WTC11 (cell line): ENCODE measurements at regions of chr11 and their contacts with region 1.

Region 1: DNA sequence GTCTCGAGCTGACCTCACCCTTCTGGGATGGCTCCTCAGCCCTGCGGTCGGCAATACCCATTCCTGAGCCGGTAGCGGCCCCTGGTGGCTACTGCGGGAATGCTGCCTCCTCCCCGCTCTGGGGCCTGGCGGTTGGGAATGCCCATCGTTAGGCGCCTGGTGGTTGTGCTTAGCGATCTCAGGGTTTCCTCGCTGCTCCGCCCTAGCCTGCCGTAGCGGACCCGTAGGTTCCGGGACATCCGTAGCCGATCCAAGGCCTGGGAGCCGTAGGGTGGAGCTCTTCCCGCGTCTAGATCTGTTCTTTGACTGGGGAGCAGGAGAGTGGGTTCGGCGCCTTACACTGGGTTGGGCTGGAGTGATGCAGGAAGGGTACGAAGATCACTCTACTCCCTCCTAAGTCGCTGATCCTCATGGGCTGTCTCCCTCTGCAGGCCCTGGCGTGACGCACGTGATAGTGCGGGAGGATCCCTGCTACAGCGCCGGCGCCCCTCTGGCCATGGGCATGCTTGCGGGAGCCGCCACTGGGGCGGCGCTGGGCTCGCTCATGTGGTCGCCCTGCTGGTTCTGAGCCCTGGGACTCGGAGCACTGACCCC is 14.8 kb downstream of the PLEKHB1 start:
- DNase-seq: peak; percentile 99
- ATAC-seq: peak; percentile 88
- H3K4me3 Mint-ChIP-seq: peak overlapping the region; percentile 72
- H3K27ac Mint-ChIP-seq: peak overlapping the region; percentile 33; the same call in 1 of the 2 replicates
- H3K4me1 Mint-ChIP-seq: peaks cover 13% of the 10 kb centered on the region
- H3K27me3 Mint-ChIP-seq: peaks cover 72% of the 10 kb centered on the region
- CTCF ChIP-seq: peak; percentile 91

Region 2: GRCh38 chr11:73393479-73394380 is 267.4 kb before region 1 on chr11:
- CTCF ChIA-PET with region 1: interaction called, 54 read pairs
- POLR2A ChIA-PET with region 1: no interaction called
- DNase-seq: peak; percentile 87
- ATAC-seq: peak; percentile 84
- H3K4me3 Mint-ChIP-seq: no peak overlapping the region
- H3K27ac Mint-ChIP-seq: no peak overlapping the region
- H3K4me1 Mint-ChIP-seq: no peaks in the 10 kb centered on the region
- H3K27me3 Mint-ChIP-seq: no peaks in the 10 kb centered on the region
- CTCF ChIP-seq: peak; percentile 68

Region 3: GRCh38 chr11:73469401-73469800 is 191.7 kb before region 1 on chr11:
- CTCF ChIA-PET with region 1: interaction called, 18 read pairs
- POLR2A ChIA-PET with region 1: no interaction called
- DNase-seq: no peak
- ATAC-seq: no peak
- H3K4me3 Mint-ChIP-seq: no peak overlapping the region
- H3K27ac Mint-ChIP-seq: peak overlapping the region; percentile 1; the same call in 1 of the 2 replicates
- H3K4me1 Mint-ChIP-seq: no peaks in the 10 kb centered on the region
- H3K27me3 Mint-ChIP-seq: no peaks in the 10 kb centered on the region
- CTCF ChIP-seq: no peak

Region 4: GRCh38 chr11:73597956-73598718 is 63.0 kb before region 1 on chr11 and contains the start of gene FAM168A:
- CTCF ChIA-PET with region 1: interaction called, 10 read pairs
- POLR2A ChIA-PET with region 1: no interaction called
- DNase-seq: peak; percentile 94
- ATAC-seq: peak; percentile 91
- H3K4me3 Mint-ChIP-seq: peak within 1 kb of the TSS; percentile 80
- H3K27ac Mint-ChIP-seq: peak within 1 kb of the TSS; percentile 85
- H3K4me1 Mint-ChIP-seq: peaks cover 43% of the 10 kb centered on the region
- H3K27me3 Mint-ChIP-seq: no peaks in the 10 kb centered on the region
- CTCF ChIP-seq: no peak
- total RNA-seq, gene FAM168A: 23.6 to 25.9 TPM (median 24.2 TPM) in 3 replicates

Region 5: DNA sequence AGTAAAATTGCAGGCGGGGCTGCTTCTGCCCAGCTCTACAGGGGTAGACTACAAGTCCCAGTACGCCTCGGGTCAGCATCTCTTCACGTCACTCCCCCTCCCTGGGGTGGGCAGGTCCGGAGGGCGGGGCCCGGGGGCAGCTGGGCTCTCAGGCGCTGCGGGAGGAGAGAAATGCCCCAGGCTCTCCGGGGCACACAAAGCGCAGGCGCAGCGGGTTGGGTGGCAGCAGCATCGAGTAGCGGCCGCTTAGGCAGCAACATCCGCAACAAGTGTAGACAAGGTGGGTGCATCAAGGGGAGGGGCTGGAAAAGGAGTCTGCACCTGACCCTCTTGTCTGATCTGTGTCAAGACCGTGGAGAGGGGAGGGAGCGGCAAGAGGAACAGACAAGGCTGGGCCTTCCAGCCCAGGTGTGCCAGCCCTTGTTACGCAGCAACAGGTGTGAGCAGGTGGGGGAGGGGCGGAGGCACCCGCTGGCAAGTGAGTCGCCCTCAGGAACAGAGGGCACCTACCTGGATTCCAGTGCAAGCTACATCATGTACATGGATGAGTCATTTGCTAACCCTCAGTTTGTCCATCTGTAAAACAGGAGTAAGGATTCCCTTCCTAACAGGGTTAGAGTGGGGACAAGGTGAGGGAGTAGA is 13.6 kb before region 1 on chr11:
- CTCF ChIA-PET with region 1: interaction called, 96 read pairs
- POLR2A ChIA-PET with region 1: interaction called, 3 read pairs
- DNase-seq: peak; percentile 96
- ATAC-seq: peak; percentile 78
- H3K4me3 Mint-ChIP-seq: peak overlapping the region; percentile 87
- H3K27ac Mint-ChIP-seq: 0 out of 2 replicates have a peak overlapping the region, but pooled peaks have one; percentile 27
- H3K4me1 Mint-ChIP-seq: peaks cover 45% of the 10 kb centered on the region
- H3K27me3 Mint-ChIP-seq: peaks cover 96% of the 10 kb centered on the region
- CTCF ChIP-seq: no peak

Region 6: DNA sequence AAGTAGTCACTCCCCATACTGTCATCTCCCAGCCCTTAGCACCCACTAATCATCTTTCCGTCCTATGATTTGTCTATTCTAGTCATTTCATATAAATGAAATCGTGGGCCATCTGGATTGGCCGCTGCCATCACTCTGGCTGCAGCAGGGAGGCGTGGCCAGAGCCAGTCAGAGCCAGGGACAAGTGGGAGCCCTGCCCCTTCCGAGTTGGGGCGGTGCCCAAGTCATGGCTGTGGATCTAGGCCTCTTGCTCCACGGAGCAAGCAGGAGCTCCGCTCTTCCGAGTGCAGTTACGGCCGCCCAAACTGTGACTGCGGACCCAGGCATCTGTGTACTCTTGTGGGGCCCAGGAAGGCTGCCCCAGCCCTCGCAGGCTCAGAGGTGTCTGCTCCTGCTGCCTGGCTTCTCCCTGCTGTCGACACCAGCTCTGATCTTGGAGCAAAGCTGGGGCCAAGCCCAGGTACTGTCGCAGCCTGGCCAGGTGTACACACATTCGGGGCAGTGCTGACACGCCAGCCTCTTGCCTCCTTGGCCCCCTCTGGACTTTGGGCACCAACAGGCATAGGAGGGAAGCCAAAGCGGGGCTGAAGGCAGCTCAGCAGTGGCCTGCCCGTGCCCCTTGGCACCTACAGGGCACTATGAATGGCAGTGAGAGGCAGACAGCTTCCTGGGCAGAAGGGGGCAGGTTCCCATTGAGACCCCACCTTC is 134.9 kb after region 1 on chr11:
- CTCF ChIA-PET with region 1: no interaction called
- POLR2A ChIA-PET with region 1: no interaction called
- DNase-seq: peak; percentile 66
- ATAC-seq: peak; percentile 98
- H3K4me3 Mint-ChIP-seq: no peak overlapping the region
- H3K27ac Mint-ChIP-seq: peak overlapping the region; percentile 94
- H3K4me1 Mint-ChIP-seq: peaks cover 6% of the 10 kb centered on the region; the same call in 1 of the 2 replicates
- H3K27me3 Mint-ChIP-seq: no peaks in the 10 kb centered on the region
- CTCF ChIP-seq: no peak

Region 7: GRCh38 chr11:73931039-73931645 is 270.0 kb after region 1 on chr11:
- CTCF ChIA-PET with region 1: interaction called, 25 read pairs
- POLR2A ChIA-PET with region 1: interaction called, 6 read pairs
- DNase-seq: peak; percentile 34
- ATAC-seq: peak; percentile 99
- H3K4me3 Mint-ChIP-seq: no peak overlapping the region
- H3K27ac Mint-ChIP-seq: no peak overlapping the region
- H3K4me1 Mint-ChIP-seq: 0 out of 2 replicates have a peak, but pooled peaks cover 2% of the 10 kb centered on the region
- H3K27me3 Mint-ChIP-seq: no peaks in the 10 kb centered on the region
- CTCF ChIP-seq: no peak

Region 8: GRCh38 chr11:74090701-74091100 is 429.6 kb after region 1 on chr11:
- CTCF ChIA-PET with region 1: no interaction called
- POLR2A ChIA-PET with region 1: no interaction called
- DNase-seq: no peak
- ATAC-seq: no peak
- H3K4me3 Mint-ChIP-seq: no peak overlapping the region
- H3K27ac Mint-ChIP-seq: no peak overlapping the region
- H3K4me1 Mint-ChIP-seq: no peaks in the 10 kb centered on the region
- H3K27me3 Mint-ChIP-seq: no peaks in the 10 kb centered on the region
- CTCF ChIP-seq: no peak